ENCODE measurements at regions of chr1 and their contacts with region 1.

Region 1: GRCh38 chr1:9573723-9574122 is 15.0 kb upstream of the TMEM201 start:
- DNase-seq: no peak
- ATAC-seq: no peak

Region 2: DNA sequence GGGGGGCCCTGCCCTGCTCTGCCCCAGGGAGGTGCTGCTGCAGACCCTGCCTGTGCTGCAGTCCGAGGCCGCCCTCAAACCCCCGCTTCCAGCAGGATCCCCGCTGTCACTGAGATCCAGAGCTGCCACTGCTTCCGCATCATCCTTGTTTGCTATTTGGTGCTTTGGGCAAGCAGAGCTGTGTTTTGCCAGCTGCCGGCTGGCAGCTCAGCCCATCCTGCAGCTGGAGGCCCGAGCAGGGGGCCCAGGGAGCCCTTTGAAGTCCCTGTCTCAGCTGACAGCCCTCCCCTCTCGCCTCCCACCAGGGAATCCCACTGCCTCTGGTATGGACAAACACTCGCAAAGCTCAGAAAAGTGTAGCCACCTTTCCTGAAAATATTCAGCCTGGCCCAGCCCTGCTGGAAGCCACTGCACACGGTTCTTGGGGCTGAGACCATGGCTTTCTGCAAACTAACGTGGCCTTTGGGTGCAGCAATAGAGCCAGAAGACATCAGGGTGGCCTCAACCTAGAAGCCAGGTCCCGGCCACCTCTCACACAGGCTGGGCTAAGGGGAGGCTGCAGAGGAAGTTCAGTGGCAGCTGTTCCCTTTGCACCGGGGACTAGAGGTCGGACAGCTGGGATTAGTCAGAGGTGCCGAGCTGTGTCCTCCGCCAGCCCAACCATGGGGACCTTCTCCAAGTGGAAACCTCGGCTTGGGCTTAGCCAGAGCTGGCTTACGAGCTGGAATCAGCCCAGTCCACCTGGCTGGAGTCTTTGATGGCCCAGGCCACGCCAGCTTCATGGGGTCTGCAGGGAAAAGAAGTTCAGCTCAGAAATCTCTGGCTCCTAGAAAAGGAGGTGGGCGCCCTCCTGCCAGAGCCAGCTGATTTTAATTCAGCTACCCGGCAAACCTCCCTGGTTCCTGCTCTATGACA is 174.0 kb before region 1 on chr1:
- intact Hi-C with region 1: no loop called
- DNase-seq: no peak
- ATAC-seq: peak; percentile 19

Region 3: GRCh38 chr1:9494929-9495758 is 78.6 kb before region 1 on chr1:
- intact Hi-C with region 1: loop called in 1 of 2 experiments (anchors 5 kb)
- DNase-seq: peak in 1 of 2 donors; percentile 65
- ATAC-seq: peak; percentile 69

Measured in left colon (tissue), 2 donors.